ENCODE measurements at regions of chr14 and their contacts with region 1.

Region 1: GRCh38 chr14:65958664-65959562 is 527.3 kb upstream of the CCDC196 start:
- DNase-seq: no peak
- H3K4me3 Mint-ChIP-seq: no peak overlapping the region
- H3K27ac Mint-ChIP-seq: no peak overlapping the region
- H3K4me1 Mint-ChIP-seq: peaks cover 13% of the 10 kb centered on the region
- H3K27me3 Mint-ChIP-seq: no peaks in the 10 kb centered on the region

Region 2: DNA sequence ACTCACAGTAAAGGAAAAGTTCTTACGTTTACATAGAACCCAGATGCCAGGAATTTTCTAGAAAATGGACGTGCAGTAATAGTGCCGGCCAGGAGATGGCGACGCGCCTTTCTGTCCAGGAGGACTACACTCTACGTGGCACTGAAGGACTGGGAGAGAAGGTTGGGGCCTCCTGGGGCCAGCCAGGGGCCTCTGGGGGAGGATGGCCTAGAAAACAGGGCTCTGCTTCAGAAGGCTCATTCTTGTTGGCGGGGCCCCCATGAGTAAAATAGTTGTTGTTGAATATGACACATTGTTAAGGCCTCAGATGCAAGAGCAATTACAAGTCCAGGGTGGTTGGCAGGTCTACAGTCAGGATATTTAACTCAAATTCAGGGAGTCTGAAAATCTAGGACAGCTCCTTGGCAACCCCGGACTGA is 736.5 kb before region 1 on chr14:
- CTCF ChIA-PET with region 1: no interaction called
- intact Hi-C with region 1: loop called (anchors 5 kb)
- DNase-seq: peak; percentile 74
- H3K4me3 Mint-ChIP-seq: no peak overlapping the region
- H3K27ac Mint-ChIP-seq: no peak overlapping the region
- H3K4me1 Mint-ChIP-seq: peaks cover 28% of the 10 kb centered on the region
- H3K27me3 Mint-ChIP-seq: no peaks in the 10 kb centered on the region

Region 3: DNA sequence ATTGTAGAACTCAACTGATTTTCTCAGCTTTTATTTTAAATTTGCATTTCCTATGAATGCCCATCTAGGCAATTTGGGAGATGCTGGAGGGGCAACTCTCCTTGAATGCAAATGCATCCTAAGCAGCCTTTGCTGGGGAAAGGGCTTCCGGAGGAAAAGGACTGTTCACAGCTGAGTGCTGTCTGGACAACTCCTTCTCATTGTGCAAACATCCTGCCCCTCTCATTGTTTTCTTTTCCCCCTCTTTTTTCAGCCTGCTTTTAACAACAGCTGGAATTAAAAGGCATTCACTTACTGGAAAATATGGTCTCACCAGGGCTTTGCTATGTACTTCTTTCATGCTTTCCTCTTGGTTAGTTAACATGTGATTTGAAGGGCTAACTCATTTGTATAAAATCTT is 148.6 kb before region 1 on chr14:
- CTCF ChIA-PET with region 1: interaction called, 5 read pairs
- intact Hi-C with region 1: loop called (anchors 2 kb)
- DNase-seq: no peak
- H3K4me3 Mint-ChIP-seq: no peak overlapping the region
- H3K27ac Mint-ChIP-seq: no peak overlapping the region
- H3K4me1 Mint-ChIP-seq: no peaks in the 10 kb centered on the region
- H3K27me3 Mint-ChIP-seq: no peaks in the 10 kb centered on the region

Region 4: DNA sequence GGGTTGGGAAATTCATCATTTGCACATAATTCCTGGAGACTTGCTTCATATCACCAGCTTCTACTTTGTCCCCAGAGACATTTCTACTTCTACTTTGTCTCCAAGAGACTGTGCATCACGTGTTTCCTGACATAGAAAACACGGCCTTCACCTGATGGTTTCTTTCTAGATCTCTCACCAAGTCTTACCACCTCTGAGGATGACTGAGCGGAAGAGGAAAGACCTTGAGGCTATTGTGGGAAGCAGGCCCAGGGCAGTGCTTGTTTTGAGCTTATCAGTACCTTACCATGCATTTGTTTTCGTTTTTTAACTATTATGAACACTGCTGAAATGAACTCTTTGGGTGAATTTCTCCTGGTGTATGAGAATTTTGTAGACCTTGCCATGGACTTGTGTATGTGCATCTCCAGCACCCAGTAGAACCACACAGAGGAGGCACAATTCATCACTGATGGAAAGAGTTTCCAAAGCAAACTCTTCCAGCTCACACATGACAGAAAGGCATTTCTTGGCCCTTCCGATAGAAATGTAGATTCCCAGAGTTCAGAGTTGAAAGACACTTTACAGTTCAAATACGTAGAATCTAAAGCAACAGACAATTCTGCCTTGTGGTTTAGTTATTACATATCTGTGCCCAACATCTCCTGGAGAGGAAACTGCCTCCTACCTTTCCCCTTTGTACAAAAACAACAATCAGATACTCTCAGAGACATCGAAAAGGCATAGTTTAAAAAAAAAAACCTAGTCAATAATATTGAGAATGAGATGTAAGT is 111.7 kb before region 1 on chr14:
- CTCF ChIA-PET with region 1: interaction called, 10 read pairs
- intact Hi-C with region 1: loop called (anchors 1 kb)
- DNase-seq: peak; percentile 83
- H3K4me3 Mint-ChIP-seq: no peak overlapping the region
- H3K27ac Mint-ChIP-seq: peak overlapping the region; percentile 71
- H3K4me1 Mint-ChIP-seq: peaks cover 62% of the 10 kb centered on the region
- H3K27me3 Mint-ChIP-seq: no peaks in the 10 kb centered on the region

Region 5: GRCh38 chr14:65927931-65928356 is 31.0 kb before region 1 on chr14:
- CTCF ChIA-PET with region 1: interaction called, 24 read pairs
- intact Hi-C with region 1: no loop called
- DNase-seq: peak; percentile 96
- H3K4me3 Mint-ChIP-seq: no peak overlapping the region
- H3K27ac Mint-ChIP-seq: peak overlapping the region; percentile 22
- H3K4me1 Mint-ChIP-seq: peaks cover 41% of the 10 kb centered on the region
- H3K27me3 Mint-ChIP-seq: no peaks in the 10 kb centered on the region

Region 6: DNA sequence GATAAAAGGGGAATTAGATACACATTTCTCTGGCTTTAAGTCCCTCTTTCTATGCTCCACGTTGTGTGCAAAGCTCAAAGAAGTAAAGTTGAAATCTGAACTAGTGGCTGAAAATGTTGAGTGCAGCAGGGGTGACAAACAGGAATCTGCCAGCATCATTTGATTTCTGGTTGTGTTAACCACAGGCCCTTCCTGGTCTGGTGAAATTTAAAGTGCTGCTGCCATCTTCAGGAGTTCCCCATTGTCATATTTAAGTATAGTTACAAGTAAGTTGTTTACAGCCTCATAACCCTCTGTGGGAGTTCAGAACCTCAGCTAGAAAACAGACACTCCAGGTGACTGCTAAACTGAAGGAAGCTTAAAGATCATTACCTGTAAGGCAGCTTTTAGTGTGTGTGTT is 436.4 kb after region 1 on chr14:
- CTCF ChIA-PET with region 1: no interaction called
- intact Hi-C with region 1: loop called (anchors 5 kb)
- DNase-seq: peak; percentile 62
- H3K4me3 Mint-ChIP-seq: no peak overlapping the region
- H3K27ac Mint-ChIP-seq: no peak overlapping the region
- H3K4me1 Mint-ChIP-seq: peaks cover 12% of the 10 kb centered on the region
- H3K27me3 Mint-ChIP-seq: no peaks in the 10 kb centered on the region

Measured in activated naive CD4-positive, alpha-beta T cell treated with anti-CD3 and anti-CD28 coated beads for 36 hours (primary cell).